ENCODE measurements at regions of chr3 and their contacts with region 1.

Region 1: DNA sequence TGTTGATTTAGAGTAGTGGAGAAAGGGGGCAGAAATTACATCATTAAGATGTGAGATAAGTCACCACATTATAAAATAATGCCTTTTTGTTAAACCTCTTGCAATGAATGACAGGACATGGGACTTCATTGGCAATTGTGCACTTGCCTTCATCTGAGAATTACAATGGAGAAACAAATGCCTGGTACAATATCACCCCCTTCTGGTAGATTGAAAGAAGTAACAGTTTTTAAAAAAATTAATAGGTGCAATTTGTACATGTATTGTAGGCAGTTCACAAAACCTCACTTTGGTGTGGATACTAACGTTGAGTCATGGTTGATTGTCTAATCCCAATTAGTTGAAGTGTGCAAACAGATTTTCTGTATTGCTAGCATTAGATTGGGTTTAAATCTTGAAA is 4.6 kb upstream of the P2RY14 start:
- DNase-seq: no peak
- H3K4me3 ChIP-seq: no peak overlapping the region
- H3K27ac ChIP-seq: peak overlapping the region; percentile 45
- H3K4me1 ChIP-seq: peaks cover 10% of the 10 kb centered on the region
- H3K27me3 ChIP-seq: no peaks in the 10 kb centered on the region
- CTCF ChIP-seq: peak; percentile 72

Region 2: DNA sequence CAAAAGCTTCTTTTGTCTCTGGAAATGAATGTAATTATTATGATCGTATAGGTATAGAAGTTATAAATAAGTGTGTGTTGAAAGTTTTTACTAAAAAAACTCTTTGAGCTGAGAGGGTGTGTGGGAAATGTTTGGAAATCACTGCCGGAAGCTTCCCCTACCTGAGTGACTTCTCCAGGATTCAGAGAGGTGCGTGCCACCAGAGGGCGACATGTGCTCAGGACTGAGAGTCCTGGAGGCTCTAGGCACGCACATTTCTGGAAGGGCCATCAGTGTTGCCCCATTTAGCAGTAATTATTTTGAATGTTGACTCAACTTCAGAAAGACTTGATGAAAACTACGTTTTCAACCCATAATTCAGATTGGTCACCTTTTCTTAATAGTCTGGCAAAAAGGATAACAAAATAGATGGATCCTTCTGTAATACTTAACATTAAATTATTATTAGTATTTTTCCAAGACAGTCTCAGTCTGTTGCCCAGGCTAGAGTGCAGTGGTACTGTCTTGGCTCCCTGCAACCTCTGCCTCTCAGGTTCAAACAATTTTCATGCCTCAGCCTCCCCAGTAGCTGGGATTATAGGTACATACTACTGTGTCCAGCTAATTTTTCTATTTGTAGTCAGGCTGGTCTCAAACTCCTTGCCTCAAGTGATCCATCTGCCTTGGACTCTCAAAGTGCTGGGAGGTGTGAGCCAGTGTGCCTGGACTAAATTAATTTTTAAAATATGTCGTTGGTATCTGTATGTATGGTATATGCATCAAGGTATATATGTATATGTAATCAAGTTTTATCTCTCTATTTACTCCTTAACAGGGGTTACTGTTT is 114.4 kb before region 1 on chr3:
- intact Hi-C with region 1: loop called (anchors 2 kb)
- DNase-seq: peak; percentile 78
- H3K4me3 ChIP-seq: no peak overlapping the region
- H3K27ac ChIP-seq: no peak overlapping the region
- H3K4me1 ChIP-seq: no peaks in the 10 kb centered on the region
- H3K27me3 ChIP-seq: no peaks in the 10 kb centered on the region
- CTCF ChIP-seq: peak; percentile 85

Region 3: GRCh38 chr3:151197981-151198767 is 84.7 kb before region 1 on chr3:
- intact Hi-C with region 1: no loop called
- DNase-seq: no peak
- H3K4me3 ChIP-seq: no peak overlapping the region
- H3K27ac ChIP-seq: no peak overlapping the region
- H3K4me1 ChIP-seq: no peaks in the 10 kb centered on the region
- H3K27me3 ChIP-seq: no peaks in the 10 kb centered on the region
- CTCF ChIP-seq: no peak

Region 4: GRCh38 chr3:151227807-151228665 is 54.9 kb before region 1 on chr3:
- intact Hi-C with region 1: loop called (anchors 2 kb)
- DNase-seq: peak; percentile 72
- H3K4me3 ChIP-seq: no peak overlapping the region
- H3K27ac ChIP-seq: peak overlapping the region; percentile 68
- H3K4me1 ChIP-seq: peaks cover 25% of the 10 kb centered on the region
- H3K27me3 ChIP-seq: no peaks in the 10 kb centered on the region
- CTCF ChIP-seq: peak; percentile 94